Activated CD4-positive, alpha-beta T cell treated with anti-CD3 and anti-CD28 coated beads for 36 hours (primary cell): ENCODE measurements at regions of chr3 and their contacts with region 1.

Region 1: DNA sequence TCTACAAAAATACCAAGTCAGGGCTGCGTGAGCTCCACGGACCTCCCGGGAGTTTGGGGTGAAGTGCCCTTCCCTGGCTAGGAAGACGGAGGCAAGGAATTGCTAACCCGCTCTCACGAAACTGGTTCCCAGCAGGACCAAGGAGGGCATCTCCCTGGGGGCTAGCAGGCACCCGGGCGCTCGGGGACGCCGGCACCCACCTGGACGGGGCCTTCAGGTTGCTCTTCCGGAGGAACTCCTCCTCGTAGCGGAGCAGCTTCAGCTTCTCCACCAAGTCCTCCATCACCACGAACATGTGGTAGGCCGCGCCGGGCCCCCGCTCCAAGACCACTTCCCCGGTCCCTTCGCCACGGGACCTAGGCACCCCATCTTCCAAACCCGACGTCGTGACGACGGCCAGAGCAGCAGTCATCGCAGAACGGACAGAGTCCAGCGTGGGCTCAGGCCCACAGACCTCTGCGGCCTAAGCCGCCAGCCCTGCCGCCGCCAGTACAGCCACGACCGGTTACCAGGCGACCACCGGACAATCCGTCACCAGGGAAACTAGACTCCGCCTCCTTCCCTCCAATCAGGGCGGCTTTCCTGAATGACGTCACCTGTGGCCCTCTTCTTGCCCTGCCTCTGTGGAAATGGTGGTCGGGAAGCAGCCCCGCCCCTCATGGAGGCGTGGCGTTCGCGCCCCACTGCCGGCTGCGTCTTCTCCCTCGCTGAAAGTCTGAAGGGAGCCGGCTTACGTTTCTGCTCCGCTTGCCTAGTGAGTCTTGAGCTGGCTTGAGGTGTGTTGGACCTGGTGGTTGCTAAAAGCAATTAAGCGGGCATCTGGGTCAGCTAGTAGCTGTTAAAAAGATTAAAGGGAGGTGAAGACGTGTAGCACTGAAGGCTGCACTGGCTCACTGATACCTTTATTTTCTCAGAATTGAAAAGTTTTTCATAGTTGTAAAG is at the start of gene IFT57:
- DNase-seq: peak; percentile 96
- ATAC-seq: peak; percentile 92
- H3K4me3 Mint-ChIP-seq: peak within 1 kb of the TSS; percentile 99
- H3K27ac Mint-ChIP-seq: peak within 1 kb of the TSS; percentile 99
- H3K4me1 Mint-ChIP-seq: peaks cover 47% of the 10 kb centered on the region
- H3K27me3 Mint-ChIP-seq: no peaks in the 10 kb centered on the region
- total RNA-seq, gene IFT57: 27.9 to 29.6 TPM

Region 2: DNA sequence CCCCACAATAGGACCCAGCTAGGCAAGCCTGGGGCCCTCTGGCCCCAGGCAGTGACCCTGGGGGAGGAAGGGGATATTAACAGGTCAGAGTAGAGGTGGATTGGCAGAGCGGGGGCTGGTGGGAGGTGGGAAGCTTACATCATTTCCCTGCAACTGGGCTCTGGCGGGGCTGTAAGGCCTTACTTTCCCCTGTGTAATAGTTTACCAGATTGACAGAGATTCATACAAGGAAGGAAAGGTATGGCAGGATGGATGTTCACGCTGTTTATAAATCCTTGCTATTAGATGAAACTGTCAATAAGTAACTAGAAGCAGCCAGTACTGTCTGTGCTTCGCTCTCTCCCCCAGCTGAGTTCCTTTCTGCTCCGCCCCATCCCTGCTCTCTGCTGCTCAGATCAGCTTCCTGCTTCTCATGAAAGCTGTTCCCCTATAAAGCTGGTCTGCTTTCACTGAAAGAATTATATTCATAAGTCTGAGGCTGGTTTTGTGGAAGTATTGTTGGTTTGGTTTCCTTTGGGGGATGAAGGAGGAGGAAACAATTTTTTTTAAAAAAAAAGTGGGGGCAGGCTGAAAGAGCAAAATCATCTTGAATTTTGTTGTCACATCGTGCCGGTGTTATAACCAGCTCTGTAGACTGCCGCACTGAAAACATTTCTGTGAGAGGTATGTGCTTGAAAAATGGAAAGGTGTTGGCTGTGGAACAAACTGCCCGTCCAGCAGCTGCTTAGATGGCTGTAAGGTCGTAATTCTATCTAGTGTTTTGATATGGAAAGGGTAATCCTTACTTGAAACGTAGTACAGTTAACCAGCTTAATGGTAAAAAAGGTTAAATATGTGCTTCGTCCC is 623.0 kb before region 1 on chr3:
- CTCF ChIA-PET with region 1: no interaction called
- POLR2A ChIA-PET with region 1: no interaction called
- intact Hi-C with region 1: loop called in 1 of 2 experiments (anchors 10 kb)
- DNase-seq: peak; percentile 68
- ATAC-seq: peak; percentile 88
- H3K4me3 Mint-ChIP-seq: peak overlapping the region; percentile 91
- H3K27ac Mint-ChIP-seq: peak overlapping the region; percentile 99
- H3K4me1 Mint-ChIP-seq: peaks cover 55% of the 10 kb centered on the region
- H3K27me3 Mint-ChIP-seq: no peaks in the 10 kb centered on the region

Region 3: GRCh38 chr3:107938143-107938542 is 284.0 kb before region 1 on chr3:
- CTCF ChIA-PET with region 1: no interaction called
- POLR2A ChIA-PET with region 1: no interaction called
- intact Hi-C with region 1: loop called in 1 of 2 experiments (anchors 5 kb)
- DNase-seq: peak; percentile 17
- ATAC-seq: no peak
- H3K4me3 Mint-ChIP-seq: no peak overlapping the region
- H3K27ac Mint-ChIP-seq: no peak overlapping the region
- H3K4me1 Mint-ChIP-seq: peaks cover 22% of the 10 kb centered on the region
- H3K27me3 Mint-ChIP-seq: peaks cover 5% of the 10 kb centered on the region

Region 4: DNA sequence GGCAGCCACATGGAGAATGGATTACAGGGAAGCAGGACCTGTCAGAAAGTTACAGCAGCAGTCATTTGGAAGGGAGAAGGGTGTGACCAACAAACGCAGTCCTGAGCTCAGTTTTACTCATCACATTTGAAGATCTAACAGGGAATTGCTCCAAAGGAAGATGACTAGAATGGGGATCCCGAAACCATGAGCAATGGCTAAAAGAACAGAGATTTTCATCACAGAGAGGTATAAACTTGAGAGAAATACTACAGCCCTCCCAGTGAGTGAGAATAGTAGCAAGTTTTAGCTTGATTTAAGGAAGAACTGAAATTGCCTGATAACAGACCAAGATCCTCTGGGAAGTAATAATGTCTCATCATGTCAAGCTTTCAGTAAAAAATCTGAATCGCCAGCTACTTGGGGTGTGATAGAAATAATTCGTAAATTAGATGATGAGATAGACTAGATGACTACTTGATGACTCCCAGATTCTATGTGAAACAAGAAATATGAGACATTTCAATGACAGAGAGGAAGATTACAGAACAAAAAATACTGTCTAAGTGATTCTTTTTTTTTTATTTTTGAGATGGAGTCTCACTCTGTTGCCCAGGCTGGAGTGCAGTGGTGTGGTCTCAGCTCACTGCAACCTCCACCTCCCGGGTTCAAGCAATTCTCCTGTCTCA is 148.3 kb before region 1 on chr3:
- CTCF ChIA-PET with region 1: no interaction called
- POLR2A ChIA-PET with region 1: no interaction called
- intact Hi-C with region 1: no loop called
- DNase-seq: no peak
- ATAC-seq: peak; percentile 54
- H3K4me3 Mint-ChIP-seq: no peak overlapping the region
- H3K27ac Mint-ChIP-seq: peak overlapping the region; percentile 66
- H3K4me1 Mint-ChIP-seq: peaks cover 77% of the 10 kb centered on the region
- H3K27me3 Mint-ChIP-seq: no peaks in the 10 kb centered on the region

Region 5: DNA sequence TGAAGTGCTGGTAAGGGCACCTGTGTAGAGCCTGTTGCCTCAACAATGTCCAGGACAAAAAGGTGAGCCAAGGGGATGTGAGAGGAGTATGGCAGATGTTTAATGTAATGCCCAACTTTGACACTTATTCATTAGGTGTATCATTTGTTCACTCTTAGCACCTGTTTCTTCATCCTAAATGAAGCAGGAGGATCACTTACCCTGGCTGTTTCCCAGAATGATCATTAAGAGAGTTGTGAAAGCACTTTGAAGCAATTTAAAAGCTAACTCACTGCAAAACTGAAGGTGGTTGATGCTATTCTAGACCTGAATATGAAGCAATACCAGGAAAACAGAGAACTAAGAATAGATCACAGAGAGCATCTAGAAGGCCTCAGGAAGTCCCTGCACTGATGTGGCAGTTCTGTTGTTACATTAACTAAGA is 70.7 kb after region 1 on chr3:
- CTCF ChIA-PET with region 1: interaction called, 3 read pairs
- POLR2A ChIA-PET with region 1: interaction called, 5 read pairs
- intact Hi-C with region 1: loop called (anchors 1 kb)
- DNase-seq: peak; percentile 39
- ATAC-seq: peak; percentile 74
- H3K4me3 Mint-ChIP-seq: no peak overlapping the region
- H3K27ac Mint-ChIP-seq: peak overlapping the region; percentile 56
- H3K4me1 Mint-ChIP-seq: peaks cover 55% of the 10 kb centered on the region
- H3K27me3 Mint-ChIP-seq: no peaks in the 10 kb centered on the region

Region 6: GRCh38 chr3:108406661-108407206 is 184.6 kb after region 1 on chr3:
- CTCF ChIA-PET with region 1: interaction called, 6 read pairs
- POLR2A ChIA-PET with region 1: no interaction called
- intact Hi-C with region 1: loop called (anchors 1 to 2 kb)
- DNase-seq: peak; percentile 35
- ATAC-seq: peak; percentile 96
- H3K4me3 Mint-ChIP-seq: no peak overlapping the region
- H3K27ac Mint-ChIP-seq: no peak overlapping the region
- H3K4me1 Mint-ChIP-seq: peaks cover 10% of the 10 kb centered on the region
- H3K27me3 Mint-ChIP-seq: no peaks in the 10 kb centered on the region

Region 7: DNA sequence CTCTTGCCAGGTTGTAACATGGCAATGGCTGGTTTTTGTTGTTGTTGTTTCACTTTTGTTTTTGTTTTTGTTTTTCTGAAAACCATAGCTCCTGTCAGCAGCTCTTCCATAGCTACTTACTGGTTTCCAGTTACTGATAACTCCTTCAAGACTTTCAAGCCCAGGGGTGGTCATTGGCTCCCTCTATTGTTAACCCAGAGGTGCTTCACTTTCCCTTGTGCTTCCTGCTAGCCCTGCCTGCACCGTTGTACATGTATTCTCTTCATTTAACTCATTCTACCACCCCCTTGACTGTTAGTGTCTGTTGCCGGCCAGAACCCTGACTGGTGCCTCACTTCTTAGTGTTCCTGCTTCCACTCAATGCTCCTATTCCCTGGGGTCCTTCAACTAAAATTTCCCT is 596.2 kb after region 1 on chr3:
- CTCF ChIA-PET with region 1: no interaction called
- POLR2A ChIA-PET with region 1: no interaction called
- intact Hi-C with region 1: loop called in 1 of 2 experiments (anchors 10 kb)
- DNase-seq: peak; percentile 76
- ATAC-seq: peak; percentile 90
- H3K4me3 Mint-ChIP-seq: peak overlapping the region; percentile 18
- H3K27ac Mint-ChIP-seq: peak overlapping the region; percentile 22
- H3K4me1 Mint-ChIP-seq: peaks cover 36% of the 10 kb centered on the region
- H3K27me3 Mint-ChIP-seq: no peaks in the 10 kb centered on the region